ENCODE measurements at regions of chr12 and their contacts with region 1.

Region 1: GRCh38 chr12:6644903-6645302 is 2.3 kb downstream of the ACRBP start:
- DNase-seq: peak; percentile 48
- H3K4me3 Mint-ChIP-seq: no peak overlapping the region
- H3K27ac Mint-ChIP-seq: no peak overlapping the region
- H3K4me1 Mint-ChIP-seq: peaks cover 6% of the 10 kb centered on the region
- H3K27me3 Mint-ChIP-seq: no peaks in the 10 kb centered on the region

Region 2: GRCh38 chr12:6383572-6384498 is 261.1 kb before region 1 on chr12 and contains the start of gene LTBR:
- CTCF ChIA-PET with region 1: no interaction called
- intact Hi-C with region 1: no loop called
- DNase-seq: peak; percentile 38
- H3K4me3 Mint-ChIP-seq: peak within 1 kb of the TSS; percentile 26
- H3K27ac Mint-ChIP-seq: no peak within 1 kb of the TSS
- H3K4me1 Mint-ChIP-seq: peaks cover 4% of the 10 kb centered on the region
- H3K27me3 Mint-ChIP-seq: peaks cover 6% of the 10 kb centered on the region
- total RNA-seq, gene LTBR: 2.1 to 3.1 TPM

Region 3: GRCh38 chr12:6613776-6614512 is 31.0 kb before region 1 on chr12:
- CTCF ChIA-PET with region 1: interaction called, 30 read pairs
- intact Hi-C with region 1: loop called (anchors 1 kb)
- DNase-seq: peak; percentile 32
- H3K4me3 Mint-ChIP-seq: no peak overlapping the region
- H3K27ac Mint-ChIP-seq: no peak overlapping the region
- H3K4me1 Mint-ChIP-seq: peaks cover 39% of the 10 kb centered on the region
- H3K27me3 Mint-ChIP-seq: no peaks in the 10 kb centered on the region

Region 4: DNA sequence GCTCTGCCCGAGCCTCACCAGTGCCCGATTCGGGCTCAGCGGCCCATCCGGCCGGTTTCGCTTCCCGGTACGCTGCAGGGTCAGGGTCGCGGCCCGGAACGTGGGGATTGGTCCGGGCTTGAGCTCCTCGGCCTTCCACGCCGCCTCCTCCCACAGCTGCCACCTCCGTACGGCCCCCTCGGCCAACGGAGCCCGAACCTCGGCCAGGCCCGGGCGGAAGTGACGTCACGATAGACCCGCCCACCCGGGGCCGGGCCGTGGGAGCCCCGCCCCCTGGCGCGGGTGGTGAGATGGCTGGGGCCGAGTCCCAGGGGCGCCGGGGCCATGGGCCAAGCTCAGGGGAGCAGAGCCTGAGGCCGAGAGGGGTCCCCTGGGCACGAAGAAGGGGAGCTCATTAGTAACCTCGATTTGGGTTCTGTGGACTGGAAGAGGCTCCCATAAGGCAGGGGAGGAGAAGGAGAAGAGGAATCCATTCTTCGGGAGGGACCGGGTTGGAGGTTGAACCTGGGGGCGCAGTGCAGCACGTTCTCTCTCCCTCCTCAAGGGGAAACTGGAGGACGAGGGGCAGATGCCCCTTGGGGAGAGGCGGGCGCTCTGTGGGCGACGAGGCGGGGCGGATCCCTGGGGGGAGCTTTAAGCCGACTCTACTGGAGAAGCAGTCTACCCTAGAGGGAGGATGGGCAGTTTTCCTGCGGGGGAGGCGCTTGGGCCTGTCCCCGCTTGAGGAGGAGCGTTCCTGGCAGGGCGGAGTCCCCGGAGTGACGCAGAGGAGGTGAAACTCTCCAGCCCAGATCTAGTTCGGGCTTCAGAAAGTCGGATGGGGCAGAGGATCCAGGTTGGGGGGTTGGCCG is 108.2 kb after region 1 on chr12 and contains the start of gene MLF2:
- CTCF ChIA-PET with region 1: no interaction called
- intact Hi-C with region 1: no loop called
- DNase-seq: peak; percentile 99
- H3K4me3 Mint-ChIP-seq: peak within 1 kb of the TSS; percentile 96
- H3K27ac Mint-ChIP-seq: peak within 1 kb of the TSS; percentile 97
- H3K4me1 Mint-ChIP-seq: peaks cover 25% of the 10 kb centered on the region
- H3K27me3 Mint-ChIP-seq: no peaks in the 10 kb centered on the region
- total RNA-seq, gene MLF2: 140 to 143 TPM